ENCODE measurements at regions of chr16 and their contacts with region 1.

Region 1: DNA sequence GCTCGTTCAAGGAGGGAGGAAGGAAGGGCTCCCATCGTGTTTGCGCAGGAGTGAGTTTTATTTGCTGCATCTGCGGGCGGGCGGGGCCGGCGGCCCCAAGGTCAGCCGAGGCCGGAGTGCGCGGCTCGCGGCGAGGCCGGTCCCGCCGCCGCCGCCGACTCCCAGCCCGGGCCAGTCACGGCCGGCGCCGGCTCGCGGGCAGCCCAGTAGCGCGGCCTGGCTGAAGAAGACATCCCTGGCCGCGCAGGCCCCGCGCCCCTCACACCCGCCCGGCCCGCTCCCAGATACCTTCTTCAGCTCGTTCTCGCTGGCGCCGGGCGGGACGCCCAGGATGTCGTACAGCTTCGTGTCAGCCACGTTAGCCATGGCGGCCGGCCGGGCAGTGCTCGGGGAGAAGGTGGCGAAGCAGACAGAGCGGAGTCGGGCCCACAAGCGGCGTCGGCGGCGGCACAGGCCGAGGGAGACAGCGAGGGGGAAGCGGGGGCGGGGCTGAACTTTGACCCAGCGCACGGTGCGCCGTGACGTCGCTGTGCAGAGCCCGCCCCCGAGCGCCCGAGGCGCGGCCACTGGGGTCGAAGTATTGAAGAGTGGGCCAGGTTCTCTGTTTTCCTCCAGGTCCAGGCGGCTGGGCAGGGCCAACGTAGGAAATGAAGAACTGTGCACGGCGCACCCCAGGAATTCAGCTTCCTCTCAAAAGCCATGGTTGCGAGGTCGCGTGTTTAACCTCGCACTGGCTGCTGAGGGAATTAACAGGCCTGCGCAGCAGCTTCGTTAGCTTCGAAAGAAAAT is at the start of gene DNAJA2:
- DNase-seq: peak; percentile 94
- CTCF ChIP-seq: no peak

Region 2: GRCh38 chr16:47141773-47142485 is 168.5 kb after region 1 on chr16:
- in situ Hi-C with region 1: loop called (anchors 25 kb)
- DNase-seq: peak; percentile 77
- CTCF ChIP-seq: peak; percentile 94

Measured in GM13976 (cell line).